Activated CD4-positive, alpha-beta T cell treated with anti-CD3 and anti-CD28 coated beads, Interleukin-2, amount 10 ng/mL, durations not matched to agents 7 days and 5 days (primary cell): ENCODE measurements at regions of chr5 and their contacts with region 1.

Region 1: GRCh38 chr5:154189819-154190594 is 526 bp upstream of the GALNT10 start:
- DNase-seq: peak; percentile 83
- H3K4me3 Mint-ChIP-seq: peak overlapping the region; percentile 82
- H3K27ac Mint-ChIP-seq: peak overlapping the region; percentile 85
- H3K4me1 Mint-ChIP-seq: peaks cover 46% of the 10 kb centered on the region
- H3K27me3 Mint-ChIP-seq: peaks cover 12% of the 10 kb centered on the region

Region 2: GRCh38 chr5:154072414-154073171 is 117.4 kb before region 1 on chr5:
- CTCF ChIA-PET with region 1: interaction called, 18 read pairs
- POLR2A ChIA-PET with region 1: interaction called, 5 read pairs
- DNase-seq: peak; percentile 89
- H3K4me3 Mint-ChIP-seq: no peak overlapping the region
- H3K27ac Mint-ChIP-seq: peak overlapping the region; percentile 14
- H3K4me1 Mint-ChIP-seq: peaks cover 54% of the 10 kb centered on the region
- H3K27me3 Mint-ChIP-seq: no peaks in the 10 kb centered on the region

Region 3: DNA sequence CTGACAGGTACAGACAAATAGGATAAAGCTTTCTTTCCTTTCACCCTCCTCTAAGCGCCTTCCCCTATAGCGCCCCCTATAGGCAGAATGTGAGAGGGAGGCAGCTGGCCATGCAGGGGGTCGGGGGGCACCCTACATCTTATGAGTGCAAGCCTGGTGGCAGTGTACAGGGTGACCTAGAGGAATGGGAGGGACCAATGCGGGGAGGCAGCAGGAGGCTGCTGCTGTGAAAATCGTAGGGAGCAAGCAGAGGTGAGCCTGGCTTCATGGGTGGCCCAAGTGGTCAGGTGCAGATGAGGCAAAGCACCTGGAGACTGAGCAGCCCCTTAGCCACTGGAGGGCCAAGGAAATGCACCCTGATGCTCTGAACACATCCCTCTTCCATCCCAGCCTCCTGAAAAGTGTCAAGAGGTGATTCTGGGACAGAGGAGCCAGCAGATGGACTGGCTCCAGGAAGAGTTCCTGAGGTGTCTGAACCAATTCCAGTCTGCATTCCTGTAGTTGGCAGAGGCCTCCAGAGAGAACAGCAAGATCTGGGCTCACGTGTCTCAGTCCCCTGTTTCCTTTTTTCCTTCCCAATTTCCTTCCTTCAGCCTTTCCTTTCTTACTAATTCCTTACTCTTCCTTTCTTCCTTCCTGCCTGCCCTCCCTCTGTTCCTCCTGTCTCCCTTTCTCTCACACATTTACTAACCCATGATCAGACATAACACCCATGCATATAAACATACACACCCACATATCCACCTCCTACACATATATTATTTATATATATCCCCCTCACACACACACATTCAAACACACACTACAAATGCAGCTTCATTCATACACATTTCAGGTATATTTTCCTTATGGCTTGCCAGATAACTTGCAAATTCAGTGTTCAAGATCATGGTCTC is 32.3 kb before region 1 on chr5:
- CTCF ChIA-PET with region 1: no interaction called
- POLR2A ChIA-PET with region 1: no interaction called
- DNase-seq: no peak
- H3K4me3 Mint-ChIP-seq: no peak overlapping the region
- H3K27ac Mint-ChIP-seq: peak overlapping the region; percentile 61
- H3K4me1 Mint-ChIP-seq: no peaks in the 10 kb centered on the region
- H3K27me3 Mint-ChIP-seq: peaks cover 53% of the 10 kb centered on the region

Region 4: DNA sequence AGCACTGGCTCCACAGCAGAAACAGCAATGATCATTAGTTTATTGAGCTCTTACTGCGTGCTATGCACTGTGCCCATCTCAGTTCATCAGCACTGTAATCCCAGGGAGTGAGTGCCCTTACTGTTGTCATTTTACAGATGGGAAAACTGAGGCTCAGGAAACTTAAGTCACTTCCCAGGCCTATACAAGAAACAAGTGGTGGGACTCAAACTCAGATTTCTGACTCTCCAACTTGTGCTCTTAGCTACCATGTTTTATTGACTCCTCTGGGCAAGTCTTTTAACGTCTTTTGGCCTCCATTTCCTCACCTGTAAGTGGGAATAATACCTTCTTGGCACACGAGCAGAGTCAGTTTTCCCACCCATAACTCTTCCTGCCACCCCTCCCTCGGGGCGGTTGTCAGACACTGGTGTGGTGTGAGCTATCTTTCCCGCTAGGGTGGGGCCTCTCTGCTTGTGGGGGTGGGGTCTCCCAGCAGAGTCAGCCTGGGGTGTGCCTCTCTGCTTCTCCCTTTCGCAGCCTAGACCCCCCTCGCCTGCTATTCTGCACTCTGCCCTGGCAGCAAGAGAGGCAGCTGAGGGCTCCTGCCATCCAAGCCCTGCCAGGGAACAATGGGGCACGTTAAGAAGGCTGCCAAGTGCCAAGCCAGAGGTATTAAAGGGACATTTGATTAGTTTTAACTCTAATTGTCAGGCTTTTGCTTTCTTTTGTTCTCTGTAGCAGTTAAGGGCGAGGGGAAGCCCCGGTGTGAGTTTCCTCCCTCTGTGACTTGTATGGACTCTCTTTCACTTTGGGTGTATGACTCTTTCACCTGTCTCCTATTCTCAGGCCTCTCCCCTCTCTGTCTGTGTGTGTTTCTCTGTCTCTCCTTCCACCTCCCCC is 12.6 kb after region 1 on chr5:
- CTCF ChIA-PET with region 1: interaction called, 43 read pairs
- POLR2A ChIA-PET with region 1: interaction called, 3 read pairs
- DNase-seq: peak; percentile 64
- H3K4me3 Mint-ChIP-seq: peak overlapping the region; percentile 62
- H3K27ac Mint-ChIP-seq: peak overlapping the region; percentile 88
- H3K4me1 Mint-ChIP-seq: peaks cover 74% of the 10 kb centered on the region
- H3K27me3 Mint-ChIP-seq: no peaks in the 10 kb centered on the region

Region 5: GRCh38 chr5:154214371-154215106 is 24.5 kb after region 1 on chr5:
- CTCF ChIA-PET with region 1: interaction called, 17 read pairs
- POLR2A ChIA-PET with region 1: interaction called, 5 read pairs
- DNase-seq: no peak
- H3K4me3 Mint-ChIP-seq: peak overlapping the region; percentile 6
- H3K27ac Mint-ChIP-seq: peak overlapping the region; percentile 32
- H3K4me1 Mint-ChIP-seq: peaks cover 60% of the 10 kb centered on the region
- H3K27me3 Mint-ChIP-seq: no peaks in the 10 kb centered on the region

Region 6: GRCh38 chr5:154230526-154230925 is 40.5 kb after region 1 on chr5:
- CTCF ChIA-PET with region 1: interaction called, 15 read pairs
- POLR2A ChIA-PET with region 1: no interaction called
- DNase-seq: no peak
- H3K4me3 Mint-ChIP-seq: no peak overlapping the region
- H3K27ac Mint-ChIP-seq: no peak overlapping the region
- H3K4me1 Mint-ChIP-seq: peaks cover 49% of the 10 kb centered on the region
- H3K27me3 Mint-ChIP-seq: no peaks in the 10 kb centered on the region

Region 7: DNA sequence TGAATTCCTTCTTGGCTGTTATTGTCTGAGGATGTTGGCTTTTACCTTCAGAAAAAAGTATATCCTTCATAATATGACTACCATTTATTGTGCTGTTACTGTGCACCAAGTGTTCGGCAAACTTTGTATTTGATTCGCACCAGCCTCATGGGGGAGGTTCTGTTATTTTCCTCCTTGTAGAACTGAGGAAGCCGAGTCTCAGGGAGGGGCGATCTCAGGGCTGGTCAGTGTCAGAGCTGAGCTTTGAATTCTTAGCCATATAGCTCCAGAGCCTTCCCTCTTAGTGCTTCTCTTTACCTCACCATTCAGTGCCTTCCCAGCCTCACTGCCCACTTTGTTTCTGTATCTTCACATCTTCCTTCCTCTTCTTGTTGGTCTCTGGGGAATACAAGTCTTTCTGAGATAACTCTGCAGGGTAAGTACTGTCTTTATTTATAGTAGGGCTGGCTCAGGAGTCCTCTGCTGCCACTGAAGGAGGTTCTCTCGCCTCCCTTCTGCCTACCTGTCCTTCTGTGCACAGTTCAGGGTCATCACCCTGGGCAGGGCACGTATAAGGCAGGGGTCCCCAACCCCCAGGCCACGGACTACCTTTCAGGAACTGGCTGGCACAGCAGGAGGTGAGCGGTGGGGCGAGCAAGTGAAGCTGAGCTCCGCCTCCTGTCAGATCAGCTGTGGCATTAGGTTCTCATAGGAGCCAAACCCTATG is 48.9 kb after region 1 on chr5:
- CTCF ChIA-PET with region 1: interaction called, 15 read pairs
- POLR2A ChIA-PET with region 1: interaction called, 4 read pairs
- DNase-seq: no peak
- H3K4me3 Mint-ChIP-seq: no peak overlapping the region
- H3K27ac Mint-ChIP-seq: no peak overlapping the region
- H3K4me1 Mint-ChIP-seq: peaks cover 34% of the 10 kb centered on the region
- H3K27me3 Mint-ChIP-seq: no peaks in the 10 kb centered on the region

Region 8: GRCh38 chr5:154260224-154260927 is 70.4 kb after region 1 on chr5:
- CTCF ChIA-PET with region 1: no interaction called
- POLR2A ChIA-PET with region 1: no interaction called
- DNase-seq: no peak
- H3K4me3 Mint-ChIP-seq: no peak overlapping the region
- H3K27ac Mint-ChIP-seq: no peak overlapping the region
- H3K4me1 Mint-ChIP-seq: peaks cover 1% of the 10 kb centered on the region
- H3K27me3 Mint-ChIP-seq: no peaks in the 10 kb centered on the region

Region 9: DNA sequence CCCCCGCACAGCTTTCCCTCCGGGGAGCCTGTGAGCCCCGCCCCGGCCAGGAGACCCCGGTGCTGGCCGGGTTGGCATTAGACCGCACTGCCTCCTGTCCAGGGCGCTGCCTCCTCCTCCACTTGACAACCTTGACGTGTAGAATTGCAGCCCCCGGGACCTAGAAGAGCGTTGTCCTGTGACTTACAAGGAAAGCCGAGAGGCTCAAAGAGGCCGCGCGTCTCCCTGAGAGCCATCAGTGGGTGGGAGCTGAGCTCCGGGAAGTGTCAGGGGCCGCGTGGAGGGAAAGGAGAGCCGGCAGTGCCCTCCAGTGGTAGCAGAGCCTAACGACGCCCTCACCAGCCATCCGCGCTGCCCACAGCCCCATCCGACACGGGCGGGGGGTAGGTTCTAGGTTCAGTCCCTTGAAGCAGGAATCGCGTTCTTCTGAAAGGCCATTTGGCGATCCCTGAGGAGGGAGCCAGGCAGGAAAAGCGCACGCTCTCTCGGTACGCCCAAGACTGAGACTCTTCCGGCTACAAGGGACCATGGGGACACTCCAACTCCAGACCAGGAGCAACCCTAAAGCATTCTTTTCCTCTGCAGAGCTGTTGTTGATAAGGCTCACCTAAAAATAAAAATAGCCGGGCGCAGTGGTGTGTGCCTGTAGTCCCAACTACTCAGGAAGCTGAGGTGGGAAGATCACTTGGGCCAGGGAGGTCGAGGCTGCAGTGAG is 215.2 kb after region 1 on chr5:
- CTCF ChIA-PET with region 1: interaction called, 10 read pairs
- POLR2A ChIA-PET with region 1: no interaction called
- DNase-seq: peak; percentile 71
- H3K4me3 Mint-ChIP-seq: no peak overlapping the region
- H3K27ac Mint-ChIP-seq: peak overlapping the region; percentile 56
- H3K4me1 Mint-ChIP-seq: peaks cover 6% of the 10 kb centered on the region
- H3K27me3 Mint-ChIP-seq: no peaks in the 10 kb centered on the region